Tibial artery (tissue), 4 donors: ENCODE measurements at regions of chr6 and their contacts with region 1.

Region 1: GRCh38 chr6:139091826-139092225 is 43.1 kb upstream of the HECA start:
- DNase-seq: no peak
- H3K4me3 ChIP-seq: no peak overlapping the region
- H3K27ac ChIP-seq: no peak overlapping the region
- H3K4me1 ChIP-seq: no peaks in the 10 kb centered on the region
- H3K27me3 ChIP-seq: no peaks in the 10 kb centered on the region
- CTCF ChIP-seq: no peak

Region 2: DNA sequence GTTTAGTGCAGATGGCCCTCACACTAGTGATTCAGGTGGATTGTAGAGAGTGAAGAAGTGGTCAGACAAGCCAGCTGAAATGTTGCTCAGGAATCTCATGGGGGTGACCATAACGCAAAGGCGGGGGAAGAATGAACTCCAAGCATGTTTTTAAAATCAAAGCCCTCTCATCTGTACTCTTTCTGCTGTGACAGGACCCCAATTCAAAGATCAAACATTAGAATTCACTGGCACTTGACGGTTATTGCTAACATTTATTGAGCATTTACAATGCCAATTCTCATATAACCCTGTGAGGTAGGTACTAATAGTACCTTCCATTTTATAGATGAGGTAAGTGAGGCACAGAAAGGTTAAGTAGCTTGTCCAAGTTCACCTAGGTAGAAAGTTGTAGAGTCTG is 47.6 kb before region 1 on chr6:
- intact Hi-C with region 1: loop called (anchors 2 kb)
- DNase-seq: no peak
- H3K4me3 ChIP-seq: no peak overlapping the region
- H3K27ac ChIP-seq: no peak overlapping the region
- H3K4me1 ChIP-seq: no peaks in the 10 kb centered on the region
- H3K27me3 ChIP-seq: no peaks in the 10 kb centered on the region
- CTCF ChIP-seq: no peak

Region 3: DNA sequence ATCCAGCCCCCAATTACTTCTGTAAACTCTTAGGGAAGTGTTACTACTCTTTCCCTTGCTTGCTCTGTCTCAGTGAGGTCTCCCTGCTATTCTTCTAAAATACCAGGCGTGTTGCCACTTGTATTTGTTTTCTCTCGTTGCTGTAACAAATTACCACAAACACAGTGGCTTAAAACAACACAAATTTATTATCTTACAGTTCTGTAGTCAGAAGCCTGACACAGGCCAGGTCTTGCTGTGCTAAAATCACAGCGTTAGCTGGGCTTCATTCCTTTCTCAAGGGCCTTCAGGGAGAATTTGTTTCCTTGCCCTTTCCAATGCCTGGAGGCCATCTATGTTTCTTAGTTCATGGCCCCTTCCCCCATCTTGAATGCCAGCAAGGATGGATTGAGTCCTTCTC is 103.0 kb after region 1 on chr6:
- intact Hi-C with region 1: no loop called
- DNase-seq: no peak
- H3K4me3 ChIP-seq: no peak overlapping the region
- H3K27ac ChIP-seq: no peak overlapping the region
- H3K4me1 ChIP-seq: no peaks in the 10 kb centered on the region
- H3K27me3 ChIP-seq: no peaks in the 10 kb centered on the region
- CTCF ChIP-seq: no peak

Region 4: GRCh38 chr6:139323511-139324300 is 231.9 kb after region 1 on chr6:
- intact Hi-C with region 1: no loop called
- DNase-seq: peak; percentile 66 to 72
- H3K4me3 ChIP-seq: no peak overlapping the region
- H3K27ac ChIP-seq: no peak overlapping the region
- H3K4me1 ChIP-seq: no peaks in the 10 kb centered on the region
- H3K27me3 ChIP-seq: no peaks in the 10 kb centered on the region
- CTCF ChIP-seq: no peak

Region 5: GRCh38 chr6:139557547-139557946 is 465.7 kb after region 1 on chr6:
- intact Hi-C with region 1: no loop called
- DNase-seq: no peak
- H3K4me3 ChIP-seq: no peak overlapping the region
- H3K27ac ChIP-seq: no peak overlapping the region
- H3K4me1 ChIP-seq: no peaks in the 10 kb centered on the region
- H3K27me3 ChIP-seq: no peaks in the 10 kb centered on the region
- CTCF ChIP-seq: no peak